GM13976 (cell line): ENCODE measurements at regions of chr19 and their contacts with region 1.

Region 1: GRCh38 chr19:2663920-2664571 is 38.4 kb downstream of the GNG7 start:
- DNase-seq: peak; percentile 82
- CTCF ChIP-seq: peak; percentile 39

Region 2: GRCh38 chr19:2610637-2611482 is 53.2 kb before region 1 on chr19:
- in situ Hi-C with region 1: no loop called
- DNase-seq: peak; percentile 76
- CTCF ChIP-seq: peak; percentile 95

Region 3: DNA sequence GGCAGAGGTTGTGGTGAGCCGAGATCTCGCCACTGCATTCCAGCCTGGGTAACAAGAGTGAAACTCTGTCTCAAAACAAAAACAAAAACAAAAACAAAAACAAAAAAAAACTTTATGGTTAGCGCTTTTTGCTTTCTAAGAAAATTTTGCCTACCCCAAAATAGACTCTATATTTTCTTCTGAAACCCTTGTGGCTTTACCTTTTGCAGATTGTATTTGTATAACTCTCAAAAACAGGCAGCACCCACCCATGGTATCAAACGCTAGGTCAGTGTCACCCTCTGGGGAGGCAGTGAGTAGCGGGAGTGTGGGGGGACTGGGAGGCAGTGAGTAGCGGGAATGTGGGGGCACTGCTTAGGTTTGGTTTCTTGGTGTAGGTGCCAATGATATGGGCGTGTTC is 83.3 kb after region 1 on chr19:
- in situ Hi-C with region 1: loop called (anchors 5 kb)
- DNase-seq: no peak
- CTCF ChIP-seq: no peak

Region 4: DNA sequence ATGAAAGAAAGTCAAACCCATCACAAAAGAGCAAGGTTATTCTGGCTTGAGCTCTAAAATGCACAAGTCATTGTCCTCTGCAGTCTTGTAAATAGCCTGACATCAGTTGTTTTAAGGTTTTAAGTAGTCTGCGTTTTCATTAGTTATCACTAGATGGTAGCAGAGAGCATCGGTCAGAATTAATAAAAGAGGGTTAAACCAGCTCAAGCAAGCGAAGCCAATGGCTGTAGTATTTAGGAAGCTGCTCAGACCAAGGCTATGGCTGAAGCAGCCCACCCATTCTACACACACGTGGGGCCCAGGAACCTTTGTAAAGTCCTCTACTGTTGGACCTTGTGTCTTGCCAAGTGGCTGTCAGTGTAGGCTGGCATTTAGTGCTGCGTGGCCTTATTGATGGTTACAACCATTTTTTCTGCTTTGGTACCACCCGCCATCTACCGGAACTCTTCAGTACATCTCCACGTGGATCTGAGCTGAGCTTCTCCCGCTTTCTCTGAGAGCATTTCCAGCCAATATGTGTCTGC is 223.4 kb after region 1 on chr19:
- in situ Hi-C with region 1: loop called (anchors 25 kb)
- DNase-seq: peak; percentile 78
- CTCF ChIP-seq: peak; percentile 30